CD4-positive, alpha-beta memory T cell (primary cell): ENCODE measurements at regions of chr10 and their contacts with region 1.

Region 1: GRCh38 chr10:30534465-30535144 is 94.9 kb downstream of the LYZL2 start:
- DNase-seq: peak; percentile 69 to 78 (median 74)
- H3K4me3 ChIP-seq: no peak overlapping the region
- H3K4me3 Mint-ChIP-seq: no peak overlapping the region
- H3K27ac ChIP-seq: no peak overlapping the region
- H3K27ac Mint-ChIP-seq: peak overlapping the region in 3 of 7 donors; percentile 2 to 73 (median 24)
- H3K4me1 ChIP-seq: peaks cover 22% of the 10 kb centered on the region
- H3K4me1 Mint-ChIP-seq: peaks cover 11 to 30% (median 20%) of the 10 kb centered on the region in 4 donors
- H3K27me3 ChIP-seq: no peaks in the 10 kb centered on the region
- H3K27me3 Mint-ChIP-seq: no peaks in the 10 kb centered on the region

Region 2: GRCh38 chr10:30392564-30392990 is 142.0 kb before region 1 on chr10:
- CTCF ChIA-PET with region 1: interaction called, 64 read pairs
- POLR2A ChIA-PET with region 1: interaction called, 9 read pairs
- intact Hi-C with region 1: loop called (anchors 1 kb)
- DNase-seq: peak; percentile 66 to 75 (median 67)
- H3K4me3 ChIP-seq: no peak overlapping the region
- H3K4me3 Mint-ChIP-seq: peak overlapping the region in 1 of 8 donors; percentile 4
- H3K27ac ChIP-seq: no peak overlapping the region
- H3K27ac Mint-ChIP-seq: peak overlapping the region in 1 of 7 donors; percentile 62
- H3K4me1 ChIP-seq: peaks cover 6% of the 10 kb centered on the region
- H3K4me1 Mint-ChIP-seq: peaks cover 2 to 5% (median 4%) of the 10 kb centered on the region in 4 donors
- H3K27me3 ChIP-seq: no peaks in the 10 kb centered on the region
- H3K27me3 Mint-ChIP-seq: peaks cover 8 to 13% of the 10 kb centered on the region in 2 donors

Region 3: DNA sequence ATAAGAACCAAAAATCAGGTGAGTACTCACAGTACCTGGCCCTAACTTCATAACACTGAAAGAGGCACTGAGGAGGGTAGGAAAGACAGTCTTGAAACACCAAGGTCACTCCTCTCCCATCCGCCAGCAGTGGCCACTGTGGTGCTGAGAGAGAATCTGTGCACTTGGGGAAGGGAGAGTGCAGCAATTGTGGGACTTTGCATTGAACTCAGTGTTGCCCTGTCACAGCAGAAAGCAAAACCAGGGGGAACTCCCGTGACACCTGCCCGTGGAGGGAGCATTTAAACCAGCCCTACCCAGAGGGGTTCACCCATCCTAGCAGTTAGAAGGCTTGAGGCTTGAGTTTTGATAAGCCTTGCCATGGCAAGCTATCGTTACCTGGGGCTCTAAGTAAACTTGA is 135.8 kb before region 1 on chr10:
- CTCF ChIA-PET with region 1: interaction called, 64 read pairs
- POLR2A ChIA-PET with region 1: interaction called, 9 read pairs
- intact Hi-C with region 1: no loop called
- DNase-seq: no peak
- H3K4me3 ChIP-seq: no peak overlapping the region
- H3K4me3 Mint-ChIP-seq: peak overlapping the region in 1 of 8 donors; percentile 41
- H3K27ac ChIP-seq: no peak overlapping the region
- H3K27ac Mint-ChIP-seq: no peak overlapping the region
- H3K4me1 ChIP-seq: peaks cover 21% of the 10 kb centered on the region
- H3K4me1 Mint-ChIP-seq: peaks cover 12 to 16% (median 15%) of the 10 kb centered on the region in 4 donors
- H3K27me3 ChIP-seq: no peaks in the 10 kb centered on the region
- H3K27me3 Mint-ChIP-seq: peaks cover 2 to 6% of the 10 kb centered on the region in 2 donors

Region 4: DNA sequence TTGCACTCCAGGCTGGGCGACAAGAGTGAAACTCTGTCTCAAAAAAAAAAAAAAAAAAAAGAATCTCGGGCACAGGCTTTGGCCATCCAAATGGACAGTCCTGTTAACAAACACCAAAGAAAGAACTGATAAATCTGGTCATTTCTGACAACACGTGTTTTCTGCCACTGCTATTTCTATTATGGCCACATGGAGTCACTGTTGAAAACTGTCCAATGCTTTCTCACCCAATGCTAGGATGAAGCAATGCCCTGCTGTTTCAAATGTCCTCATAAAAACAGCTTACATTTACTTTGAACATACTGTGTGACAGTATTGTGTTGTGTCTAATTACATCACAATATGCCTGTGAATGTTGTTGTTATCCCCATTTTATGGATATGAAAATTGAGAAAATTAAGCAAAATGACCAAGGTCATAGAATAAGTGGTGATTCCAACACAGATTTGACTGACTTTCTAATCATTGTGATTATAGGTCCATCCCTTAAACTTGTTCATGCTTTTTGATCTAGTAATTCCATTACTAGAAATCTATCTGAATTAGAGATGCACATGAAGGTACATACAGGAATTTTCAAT is 120.5 kb before region 1 on chr10:
- CTCF ChIA-PET with region 1: interaction called, 133 read pairs
- POLR2A ChIA-PET with region 1: interaction called, 32 read pairs
- intact Hi-C with region 1: loop called (anchors 1 kb)
- DNase-seq: peak in 4 of 5 donors; percentile 46 to 53 (median 52)
- H3K4me3 ChIP-seq: no peak overlapping the region
- H3K4me3 Mint-ChIP-seq: no peak overlapping the region
- H3K27ac ChIP-seq: no peak overlapping the region
- H3K27ac Mint-ChIP-seq: no peak overlapping the region
- H3K4me1 ChIP-seq: peaks cover 15% of the 10 kb centered on the region
- H3K4me1 Mint-ChIP-seq: peaks cover 11 to 19% (median 16%) of the 10 kb centered on the region in 4 donors
- H3K27me3 ChIP-seq: no peaks in the 10 kb centered on the region
- H3K27me3 Mint-ChIP-seq: no peaks in the 10 kb centered on the region

Region 5: GRCh38 chr10:30420266-30420665 is 114.3 kb before region 1 on chr10:
- CTCF ChIA-PET with region 1: interaction called, 87 read pairs
- POLR2A ChIA-PET with region 1: interaction called, 32 read pairs
- intact Hi-C with region 1: loop called (anchors 1 kb)
- DNase-seq: no peak
- H3K4me3 ChIP-seq: no peak overlapping the region
- H3K4me3 Mint-ChIP-seq: no peak overlapping the region
- H3K27ac ChIP-seq: no peak overlapping the region
- H3K27ac Mint-ChIP-seq: no peak overlapping the region
- H3K4me1 ChIP-seq: peaks cover 15% of the 10 kb centered on the region
- H3K4me1 Mint-ChIP-seq: peaks cover 10 to 22% (median 15%) of the 10 kb centered on the region in 4 donors
- H3K27me3 ChIP-seq: no peaks in the 10 kb centered on the region
- H3K27me3 Mint-ChIP-seq: no peaks in the 10 kb centered on the region

Region 6: GRCh38 chr10:30433730-30434272 is 100.8 kb before region 1 on chr10 and contains the start of gene MAP3K8:
- CTCF ChIA-PET with region 1: interaction called, 17 read pairs
- POLR2A ChIA-PET with region 1: interaction called, 79 read pairs
- intact Hi-C with region 1: loop called (anchors 1 kb)
- DNase-seq: peak; percentile 75 to 89 (median 79)
- H3K4me3 ChIP-seq: peak within 1 kb of the TSS; percentile 55 to 75
- H3K4me3 Mint-ChIP-seq: peak within 1 kb of the TSS; percentile 83 to 94 (median 92)
- H3K27ac ChIP-seq: peak within 1 kb of the TSS; percentile 88
- H3K27ac Mint-ChIP-seq: peak within 1 kb of the TSS; percentile 70 to 94 (median 91)
- H3K4me1 ChIP-seq: peaks cover 51% of the 10 kb centered on the region
- H3K4me1 Mint-ChIP-seq: peaks cover 37 to 55% (median 45%) of the 10 kb centered on the region in 4 donors
- H3K27me3 ChIP-seq: no peaks in the 10 kb centered on the region
- H3K27me3 Mint-ChIP-seq: no peaks in the 10 kb centered on the region
- total RNA-seq, gene MAP3K8: 5.5 to 6.5 TPM

Region 7: GRCh38 chr10:30583778-30584415 is 49.3 kb after region 1 on chr10:
- CTCF ChIA-PET with region 1: interaction called, 20 read pairs
- POLR2A ChIA-PET with region 1: no interaction called
- intact Hi-C with region 1: no loop called
- DNase-seq: no peak
- H3K4me3 ChIP-seq: no peak overlapping the region
- H3K4me3 Mint-ChIP-seq: peak overlapping the region; percentile 33 to 84 (median 66)
- H3K27ac ChIP-seq: no peak overlapping the region
- H3K27ac Mint-ChIP-seq: peak overlapping the region in 1 of 7 donors; percentile 81
- H3K4me1 ChIP-seq: no peaks in the 10 kb centered on the region
- H3K4me1 Mint-ChIP-seq: peaks cover 1 to 9% (median 6%) of the 10 kb centered on the region in 4 donors
- H3K27me3 ChIP-seq: no peaks in the 10 kb centered on the region
- H3K27me3 Mint-ChIP-seq: peaks cover 3 to 8% of the 10 kb centered on the region in 2 donors

Region 8: GRCh38 chr10:30928742-30929141 is 394.1 kb after region 1 on chr10:
- CTCF ChIA-PET with region 1: no interaction called
- POLR2A ChIA-PET with region 1: no interaction called
- intact Hi-C with region 1: no loop called
- DNase-seq: no peak
- H3K4me3 ChIP-seq: no peak overlapping the region
- H3K4me3 Mint-ChIP-seq: peak overlapping the region in 5 of 8 donors; percentile 8 to 58 (median 30)
- H3K27ac ChIP-seq: no peak overlapping the region
- H3K27ac Mint-ChIP-seq: peak overlapping the region in 5 of 7 donors; percentile 13 to 78 (median 40)
- H3K4me1 ChIP-seq: no peaks in the 10 kb centered on the region
- H3K4me1 Mint-ChIP-seq: peaks cover 0 to 6% (median 4%) of the 10 kb centered on the region in 4 donors
- H3K27me3 ChIP-seq: no peaks in the 10 kb centered on the region
- H3K27me3 Mint-ChIP-seq: no peaks in the 10 kb centered on the region